Gastrocnemius medialis (tissue), 4 donors: ENCODE measurements at regions of chr2 and their contacts with region 1.

Region 1: GRCh38 chr2:69914170-69914960 is 544 bp upstream of the MXD1 start:
- DNase-seq: peak; percentile 100
- ATAC-seq: peak; percentile 89 to 92
- H3K4me3 ChIP-seq: peak overlapping the region; percentile 77 to 87 (median 84)
- H3K27ac ChIP-seq: peak overlapping the region; percentile 96 to 99 (median 98)
- H3K4me1 ChIP-seq: peaks cover 30 to 45% of the 10 kb centered on the region in 2 donors
- H3K27me3 ChIP-seq: no peaks in the 10 kb centered on the region
- CTCF ChIP-seq: peak in 2 of 5 experiments; percentile 10 to 15
- POLR2A ChIP-seq: peak; percentile 72 to 80

Region 2: GRCh38 chr2:69741619-69742466 is 172.5 kb before region 1 on chr2 and contains the start of gene ANXA4:
- in situ Hi-C with region 1: no loop called
- intact Hi-C with region 1: loop called (anchors 10 kb)
- DNase-seq: peak; percentile 82
- ATAC-seq: peak; percentile 84 to 92
- H3K4me3 ChIP-seq: peak within 1 kb of the TSS; percentile 73 to 96 (median 88)
- H3K27ac ChIP-seq: peak within 1 kb of the TSS; percentile 84 to 98 (median 92)
- H3K4me1 ChIP-seq: peaks cover 14 to 19% of the 10 kb centered on the region in 2 donors
- H3K27me3 ChIP-seq: no peaks in the 10 kb centered on the region
- CTCF ChIP-seq: peak in 2 of 5 experiments; percentile 10 to 19
- POLR2A ChIP-seq: peak; percentile 87 to 88
- total RNA-seq, gene ANXA4: 10.7 to 17.0 (median 15.8) TPM

Region 3: GRCh38 chr2:70086838-70087701 is 172.7 kb after region 1 on chr2 and contains the start of gene PCBP1:
- in situ Hi-C with region 1: no loop called
- intact Hi-C with region 1: loop called (anchors 1 kb)
- DNase-seq: peak; percentile 92 to 94
- ATAC-seq: peak; percentile 71 to 75
- H3K4me3 ChIP-seq: peak within 1 kb of the TSS; percentile 91 to 95 (median 92)
- H3K27ac ChIP-seq: peak within 1 kb of the TSS; percentile 98 to 100 (median 98)
- H3K4me1 ChIP-seq: peaks cover 30 to 34% of the 10 kb centered on the region in 2 donors
- H3K27me3 ChIP-seq: no peaks in the 10 kb centered on the region
- CTCF ChIP-seq: no peak
- POLR2A ChIP-seq: peak; percentile 90 to 93
- total RNA-seq, gene PCBP1: 178 to 296 (median 262) TPM

Region 4: GRCh38 chr2:70248181-70248847 is 333.9 kb after region 1 on chr2 and contains the start of gene TIA1:
- in situ Hi-C with region 1: no loop called
- intact Hi-C with region 1: loop called (anchors 2 kb)
- DNase-seq: peak; percentile 97 to 98
- ATAC-seq: peak; percentile 96 to 97
- H3K4me3 ChIP-seq: peak within 1 kb of the TSS; percentile 87 to 99 (median 92)
- H3K27ac ChIP-seq: peak within 1 kb of the TSS; percentile 94 to 99 (median 95)
- H3K4me1 ChIP-seq: peaks cover 21 to 27% of the 10 kb centered on the region in 2 donors
- H3K27me3 ChIP-seq: no peaks in the 10 kb centered on the region
- CTCF ChIP-seq: no peak
- POLR2A ChIP-seq: peak; percentile 65 to 73
- total RNA-seq, gene TIA1: 20.2 to 54.8 (median 26.6) TPM

Region 5: DNA sequence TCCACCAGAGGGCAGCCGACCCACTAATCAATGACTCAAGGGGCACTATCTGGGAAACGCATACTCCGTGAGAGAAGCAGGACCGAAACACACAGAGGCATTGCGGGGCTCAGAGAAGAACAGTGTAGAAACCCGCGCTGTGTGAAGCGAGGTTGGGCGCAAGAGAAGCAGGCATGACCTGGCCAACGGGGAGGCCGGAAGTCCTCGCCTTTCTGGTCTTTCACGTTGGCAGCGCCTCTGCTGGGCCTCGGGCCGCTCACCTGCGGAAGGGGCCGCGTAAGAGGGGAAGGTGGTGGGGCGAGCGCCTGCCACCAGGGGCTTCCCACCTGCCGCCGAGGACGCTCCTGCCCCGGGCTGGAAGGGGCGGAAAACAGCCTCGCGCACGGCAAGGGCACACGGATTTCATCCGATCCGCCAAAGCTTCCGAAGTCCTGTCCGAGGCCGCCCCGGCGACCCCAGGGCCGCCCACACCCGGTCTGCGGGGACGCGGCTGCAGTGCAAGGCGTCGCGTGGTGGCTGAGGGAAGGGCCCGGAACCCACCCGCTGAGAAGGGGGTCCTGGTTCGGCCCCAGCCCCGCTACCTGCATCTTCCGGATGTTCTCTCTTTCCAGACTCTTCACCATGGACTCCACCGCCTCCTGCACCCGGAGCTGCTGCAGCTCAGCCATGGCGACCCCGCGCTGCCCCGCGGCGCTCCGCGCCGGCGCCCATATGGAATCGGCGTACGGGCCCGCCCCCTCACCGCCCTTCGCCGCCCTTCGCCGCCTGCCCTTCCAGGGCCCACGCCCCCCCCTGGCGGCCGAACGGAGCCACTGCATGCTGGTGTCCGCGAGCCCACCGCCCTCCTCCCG is 387.2 kb after region 1 on chr2 and contains the start of gene FAM136A:
- in situ Hi-C with region 1: loop called (anchors 10 to 25 kb)
- intact Hi-C with region 1: loop called (anchors 2 kb)
- DNase-seq: peak; percentile 53 to 76
- ATAC-seq: peak; percentile 88 to 89
- H3K4me3 ChIP-seq: peak within 1 kb of the TSS; percentile 90 to 100 (median 96)
- H3K27ac ChIP-seq: peak within 1 kb of the TSS; percentile 82 to 91 (median 86)
- H3K4me1 ChIP-seq: peaks cover 10% of the 10 kb centered on the region in 2 donors
- H3K27me3 ChIP-seq: no peaks in the 10 kb centered on the region
- CTCF ChIP-seq: peak; percentile 88 to 99 (median 96)
- POLR2A ChIP-seq: peak; percentile 15 to 28
- total RNA-seq, gene FAM136A: 12.7 to 23.7 (median 17.7) TPM

Region 6: GRCh38 chr2:70328921-70329561 is 414.7 kb after region 1 on chr2:
- in situ Hi-C with region 1: no loop called
- intact Hi-C with region 1: no loop called
- DNase-seq: no peak
- ATAC-seq: no peak
- H3K4me3 ChIP-seq: no peak overlapping the region
- H3K27ac ChIP-seq: no peak overlapping the region
- H3K4me1 ChIP-seq: no peaks in the 10 kb centered on the region
- H3K27me3 ChIP-seq: no peaks in the 10 kb centered on the region
- CTCF ChIP-seq: no peak
- POLR2A ChIP-seq: no peak